ENCODE measurements at regions of chr11 and their contacts with region 1.

Region 1: DNA sequence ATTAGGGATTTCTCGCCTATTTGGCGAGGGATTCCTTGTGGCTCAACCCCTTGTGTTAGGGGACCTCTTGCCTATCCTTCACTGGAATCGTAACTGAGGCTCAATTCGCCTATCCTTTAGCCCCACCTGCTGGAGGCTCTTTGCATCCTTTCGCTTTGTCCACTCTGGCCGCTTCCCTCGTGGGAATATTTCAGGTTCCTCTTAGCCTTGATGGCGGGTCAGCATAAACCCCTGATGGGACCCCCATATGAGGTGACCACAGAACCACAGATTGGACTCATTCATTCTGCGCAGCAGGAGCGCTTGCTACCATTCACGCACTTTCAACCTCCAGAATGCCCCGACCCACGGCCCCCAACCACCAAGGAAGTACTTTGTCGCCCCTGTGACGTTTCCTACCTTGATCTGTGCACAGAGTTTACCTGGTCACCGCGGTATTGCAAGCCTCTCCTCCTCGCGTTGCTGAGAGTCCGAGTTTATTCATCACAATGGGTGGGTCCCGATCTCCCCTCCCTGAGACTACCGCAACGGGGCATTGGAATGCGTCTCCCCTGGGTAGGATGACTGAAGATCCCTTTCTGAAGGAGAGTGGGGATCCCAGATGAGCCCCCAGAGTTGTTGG is at the start of gene OR52N2:
- DNase-seq: peak; percentile 74
- H3K4me3 ChIP-seq: peak within 1 kb of the TSS; percentile 47
- H3K27ac ChIP-seq: no peak within 1 kb of the TSS
- H3K4me1 ChIP-seq: no peaks in the 10 kb centered on the region
- CTCF ChIP-seq: peak; percentile 90
- total RNA-seq, gene OR52N2: not detected in 2 replicates

Region 2: DNA sequence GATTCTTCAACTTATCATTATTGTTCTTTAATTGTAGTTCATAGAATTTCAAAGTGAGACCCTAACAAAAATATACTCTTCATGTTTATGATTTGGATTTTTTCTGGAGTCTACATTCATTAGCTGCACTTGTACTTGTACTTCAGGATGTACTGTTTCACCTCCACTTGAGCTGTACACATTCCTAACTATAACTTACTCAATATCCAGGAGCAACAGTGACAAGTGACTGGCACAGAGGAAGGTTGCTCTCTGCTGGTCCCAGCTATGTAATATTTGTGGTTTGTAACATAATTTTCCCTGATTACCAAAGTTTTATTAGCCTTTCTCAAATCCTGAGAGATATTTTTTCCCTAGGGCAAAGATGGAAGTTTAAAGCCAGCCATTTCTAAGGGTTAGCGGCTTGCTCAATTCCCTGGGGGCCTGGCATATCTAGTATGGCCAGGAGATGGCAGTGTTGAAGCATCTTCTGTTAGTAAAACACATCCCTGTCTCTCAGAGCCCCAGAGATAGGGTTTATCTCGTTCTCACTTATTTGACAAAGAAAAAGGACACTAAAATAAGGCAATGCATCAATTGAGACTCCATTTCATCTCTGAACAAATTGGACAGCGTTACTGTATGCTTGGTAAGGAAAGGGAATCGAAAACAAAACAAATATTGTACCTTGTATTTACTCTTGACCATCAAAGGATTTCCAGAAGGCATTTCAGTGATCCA is 684.6 kb before region 1 on chr11:
- CTCF ChIA-PET with region 1: no interaction called
- POLR2A ChIA-PET with region 1: no interaction called
- intact Hi-C with region 1: loop called (anchors 5 kb)
- DNase-seq: peak; percentile 72
- H3K4me3 ChIP-seq: no peak overlapping the region
- H3K27ac ChIP-seq: no peak overlapping the region
- H3K4me1 ChIP-seq: no peaks in the 10 kb centered on the region
- CTCF ChIP-seq: peak; percentile 91

Region 3: GRCh38 chr11:5476184-5476819 is 332.3 kb before region 1 on chr11:
- CTCF ChIA-PET with region 1: no interaction called
- POLR2A ChIA-PET with region 1: no interaction called
- intact Hi-C with region 1: loop called (anchors 1 kb)
- DNase-seq: peak; percentile 60
- H3K4me3 ChIP-seq: no peak overlapping the region
- H3K27ac ChIP-seq: no peak overlapping the region
- H3K4me1 ChIP-seq: no peaks in the 10 kb centered on the region
- CTCF ChIP-seq: peak; percentile 94

Region 4: GRCh38 chr11:5600374-5600851 is 208.2 kb before region 1 on chr11:
- CTCF ChIA-PET with region 1: no interaction called
- POLR2A ChIA-PET with region 1: no interaction called
- intact Hi-C with region 1: loop called (anchors 1 kb)
- DNase-seq: peak; percentile 82
- H3K4me3 ChIP-seq: no peak overlapping the region
- H3K27ac ChIP-seq: no peak overlapping the region
- H3K4me1 ChIP-seq: no peaks in the 10 kb centered on the region
- CTCF ChIP-seq: peak; percentile 91

Measured in OCI-LY7 (cell line).